Endothelial cell of umbilical vein (primary cell): ENCODE measurements at regions of chr6 and their contacts with region 1.

Region 1: GRCh38 chr6:72861935-72862432 is 240.1 kb downstream of the KCNQ5 start:
- DNase-seq: peak; percentile 88
- H3K4me3 ChIP-seq: no peak overlapping the region
- H3K27ac ChIP-seq: peak overlapping the region; percentile 96
- H3K4me1 ChIP-seq: peaks cover 31% of the 10 kb centered on the region
- H3K27me3 ChIP-seq: no peaks in the 10 kb centered on the region
- CTCF ChIP-seq: no peak
- POLR2A ChIP-seq: no peak

Region 2: DNA sequence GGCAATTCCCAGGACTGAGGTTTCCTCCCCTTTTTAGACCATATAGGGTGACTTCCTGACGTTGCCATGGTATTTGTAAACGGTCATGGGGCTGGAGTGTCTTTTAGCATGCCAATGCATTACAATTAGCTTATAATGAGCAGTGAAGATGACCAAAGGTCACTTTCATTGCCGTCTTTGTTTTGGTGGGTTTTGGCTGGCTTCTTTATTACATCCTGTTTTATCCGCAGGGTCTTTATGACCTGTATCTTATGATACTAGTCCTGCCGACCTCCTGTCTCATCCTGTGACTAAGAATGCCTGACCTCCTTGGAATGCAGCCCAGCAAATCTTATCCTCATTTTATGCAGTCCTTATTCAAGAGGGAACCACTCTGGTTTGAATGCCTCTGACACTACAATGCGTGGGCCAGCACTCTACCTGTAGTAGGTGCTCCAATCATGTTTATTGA is 50.0 kb before region 1 on chr6:
- CTCF ChIA-PET with region 1: no interaction called
- POLR2A ChIA-PET with region 1: no interaction called
- dilution Hi-C with region 1: no loop called
- intact Hi-C with region 1: no loop called
- DNase-seq: peak; percentile 8
- H3K4me3 ChIP-seq: no peak overlapping the region
- H3K27ac ChIP-seq: no peak overlapping the region
- H3K4me1 ChIP-seq: no peaks in the 10 kb centered on the region
- H3K27me3 ChIP-seq: no peaks in the 10 kb centered on the region
- CTCF ChIP-seq: no peak
- POLR2A ChIP-seq: no peak

Region 3: DNA sequence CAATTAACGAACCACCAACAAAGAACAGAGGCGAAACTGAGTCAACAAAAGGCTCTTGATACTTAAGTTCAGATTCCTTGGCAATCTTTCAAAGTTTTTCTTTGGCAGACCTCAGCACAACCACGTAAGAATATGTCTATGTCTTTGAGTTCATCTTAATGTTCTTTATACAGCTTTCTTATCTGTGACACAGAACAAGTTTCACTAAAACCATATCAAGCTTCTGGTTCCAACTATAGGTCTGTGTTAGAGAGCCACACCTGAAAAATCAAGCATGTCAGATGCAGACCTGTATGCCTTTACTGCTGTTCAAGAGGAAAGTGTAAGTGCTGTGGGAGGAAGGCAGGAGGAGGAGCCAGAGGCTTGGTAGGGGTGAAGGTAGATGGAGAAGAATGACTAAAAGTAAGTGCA is 92.0 kb after region 1 on chr6:
- CTCF ChIA-PET with region 1: no interaction called
- POLR2A ChIA-PET with region 1: no interaction called
- dilution Hi-C with region 1: no loop called
- intact Hi-C with region 1: loop called (anchors 1 kb)
- DNase-seq: peak; percentile 66
- H3K4me3 ChIP-seq: no peak overlapping the region
- H3K27ac ChIP-seq: peak overlapping the region; percentile 97
- H3K4me1 ChIP-seq: peaks cover 37% of the 10 kb centered on the region
- H3K27me3 ChIP-seq: no peaks in the 10 kb centered on the region
- CTCF ChIP-seq: no peak
- POLR2A ChIP-seq: no peak

Region 4: DNA sequence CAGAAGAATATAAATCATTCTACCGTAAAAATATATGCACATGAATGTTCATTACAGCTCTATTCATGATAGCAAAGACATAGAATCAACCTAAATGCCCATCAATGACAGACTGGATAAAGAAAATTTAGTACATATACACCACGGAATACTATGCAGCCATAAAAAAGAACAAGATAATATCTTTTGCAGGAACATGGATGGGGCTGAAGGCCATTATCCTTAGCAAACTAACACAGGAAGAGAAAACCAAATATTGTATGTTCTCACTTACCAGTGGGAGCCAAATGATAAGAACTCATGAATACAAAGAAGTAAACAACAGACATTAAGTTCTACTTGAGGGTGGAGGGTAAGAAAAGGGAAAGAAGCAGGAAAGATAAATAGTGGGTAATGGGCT is 354.9 kb after region 1 on chr6:
- CTCF ChIA-PET with region 1: no interaction called
- POLR2A ChIA-PET with region 1: no interaction called
- dilution Hi-C with region 1: no loop called
- intact Hi-C with region 1: no loop called
- DNase-seq: no peak
- H3K4me3 ChIP-seq: no peak overlapping the region
- H3K27ac ChIP-seq: no peak overlapping the region
- H3K4me1 ChIP-seq: no peaks in the 10 kb centered on the region
- H3K27me3 ChIP-seq: no peaks in the 10 kb centered on the region
- CTCF ChIP-seq: no peak
- POLR2A ChIP-seq: no peak